ENCODE measurements at regions of chr15 and their contacts with region 1.

Region 1: GRCh38 chr15:93087825-93088199 is 1.2 kb downstream of the RGMA start:
- DNase-seq: peak; percentile 80
- H3K4me3 Mint-ChIP-seq: peak overlapping the region; percentile 69
- H3K27ac Mint-ChIP-seq: no peak overlapping the region
- H3K4me1 Mint-ChIP-seq: no peaks in the 10 kb centered on the region
- H3K27me3 Mint-ChIP-seq: peaks cover 23% of the 10 kb centered on the region
- CTCF ChIP-seq: peak; percentile 88

Region 2: GRCh38 chr15:93035953-93036800 is 51.6 kb before region 1 on chr15:
- CTCF ChIA-PET with region 1: interaction called, 20 read pairs
- POLR2A ChIA-PET with region 1: no interaction called
- intact Hi-C with region 1: loop called (anchors 2 kb)
- DNase-seq: peak; percentile 59
- H3K4me3 Mint-ChIP-seq: no peak overlapping the region
- H3K27ac Mint-ChIP-seq: no peak overlapping the region
- H3K4me1 Mint-ChIP-seq: peaks cover 9% of the 10 kb centered on the region
- H3K27me3 Mint-ChIP-seq: no peaks in the 10 kb centered on the region
- CTCF ChIP-seq: peak; percentile 55

Region 3: DNA sequence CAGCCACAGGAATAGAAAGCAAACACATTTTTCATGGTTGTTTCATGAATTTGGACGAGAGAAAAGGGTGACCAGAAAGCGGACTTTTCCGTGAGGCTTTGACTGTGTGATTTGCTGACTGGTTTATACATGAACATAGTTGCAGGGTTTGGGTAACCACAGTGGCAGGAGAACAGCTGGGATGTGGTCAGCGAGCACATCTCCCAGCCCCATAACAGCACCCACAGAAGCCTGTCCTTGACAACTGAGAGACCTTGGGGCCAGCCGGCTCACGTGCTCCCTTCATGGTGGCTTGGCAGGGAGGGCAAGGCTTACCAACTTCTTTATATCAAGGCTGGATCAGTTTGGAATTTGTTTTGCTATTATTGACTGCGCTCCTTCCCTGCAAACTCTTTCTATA is 14.4 kb after region 1 on chr15:
- CTCF ChIA-PET with region 1: interaction called, 10 read pairs
- POLR2A ChIA-PET with region 1: no interaction called
- intact Hi-C with region 1: no loop called
- DNase-seq: no peak
- H3K4me3 Mint-ChIP-seq: no peak overlapping the region
- H3K27ac Mint-ChIP-seq: no peak overlapping the region
- H3K4me1 Mint-ChIP-seq: no peaks in the 10 kb centered on the region
- H3K27me3 Mint-ChIP-seq: no peaks in the 10 kb centered on the region
- CTCF ChIP-seq: no peak

Region 4: DNA sequence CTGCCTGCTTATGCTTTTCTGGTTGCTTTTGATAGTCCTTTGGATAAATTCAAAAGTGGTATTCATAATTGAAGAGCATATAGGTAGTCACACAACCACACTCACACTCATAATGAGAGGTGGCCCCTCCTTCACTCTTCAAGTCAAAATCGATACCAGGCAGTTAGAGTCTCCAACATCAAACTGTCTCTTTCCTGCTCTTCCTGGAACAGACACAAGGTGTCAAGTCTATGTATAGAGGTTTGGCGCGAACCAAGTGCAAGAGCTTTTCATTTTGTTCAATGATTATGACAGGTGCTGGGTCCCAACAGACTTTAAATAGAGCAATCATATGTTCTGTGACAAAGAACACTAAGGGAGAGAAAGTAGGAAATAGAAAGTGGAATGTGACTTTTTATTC is 31.1 kb after region 1 on chr15:
- CTCF ChIA-PET with region 1: no interaction called
- POLR2A ChIA-PET with region 1: no interaction called
- intact Hi-C with region 1: no loop called
- DNase-seq: no peak
- H3K4me3 Mint-ChIP-seq: no peak overlapping the region
- H3K27ac Mint-ChIP-seq: no peak overlapping the region
- H3K4me1 Mint-ChIP-seq: no peaks in the 10 kb centered on the region
- H3K27me3 Mint-ChIP-seq: no peaks in the 10 kb centered on the region
- CTCF ChIP-seq: no peak

Region 5: GRCh38 chr15:93566762-93567161 is 478.9 kb after region 1 on chr15:
- CTCF ChIA-PET with region 1: no interaction called
- POLR2A ChIA-PET with region 1: no interaction called
- intact Hi-C with region 1: loop called (anchors 1 kb)
- DNase-seq: peak; percentile 68
- H3K4me3 Mint-ChIP-seq: no peak overlapping the region
- H3K27ac Mint-ChIP-seq: peak overlapping the region; percentile 16
- H3K4me1 Mint-ChIP-seq: peaks cover 10% of the 10 kb centered on the region
- H3K27me3 Mint-ChIP-seq: no peaks in the 10 kb centered on the region
- CTCF ChIP-seq: no peak

Region 6: GRCh38 chr15:93982226-93982727 is 894.5 kb after region 1 on chr15:
- CTCF ChIA-PET with region 1: interaction called, 65 read pairs
- POLR2A ChIA-PET with region 1: interaction called, 3 read pairs
- intact Hi-C with region 1: no loop called
- DNase-seq: no peak
- H3K4me3 Mint-ChIP-seq: no peak overlapping the region
- H3K27ac Mint-ChIP-seq: no peak overlapping the region
- H3K4me1 Mint-ChIP-seq: no peaks in the 10 kb centered on the region
- H3K27me3 Mint-ChIP-seq: no peaks in the 10 kb centered on the region
- CTCF ChIP-seq: no peak